Activated CD8-positive, alpha-beta memory T cell treated with anti-CD3 and anti-CD28 coated beads, Interleukin-2, amount 10 ng/mL, durations not matched to agents 7 days and 5 days (primary cell): ENCODE measurements at regions of chr15 and their contacts with region 1.

Region 1: GRCh38 chr15:85044251-85044853 is 62.7 kb downstream of the PDE8A start:
- DNase-seq: peak; percentile 67
- ATAC-seq: peak; percentile 58
- H3K4me3 Mint-ChIP-seq: no peak overlapping the region
- H3K27ac Mint-ChIP-seq: no peak overlapping the region
- H3K4me1 Mint-ChIP-seq: peaks cover 35% of the 10 kb centered on the region
- H3K27me3 Mint-ChIP-seq: no peaks in the 10 kb centered on the region

Region 2: DNA sequence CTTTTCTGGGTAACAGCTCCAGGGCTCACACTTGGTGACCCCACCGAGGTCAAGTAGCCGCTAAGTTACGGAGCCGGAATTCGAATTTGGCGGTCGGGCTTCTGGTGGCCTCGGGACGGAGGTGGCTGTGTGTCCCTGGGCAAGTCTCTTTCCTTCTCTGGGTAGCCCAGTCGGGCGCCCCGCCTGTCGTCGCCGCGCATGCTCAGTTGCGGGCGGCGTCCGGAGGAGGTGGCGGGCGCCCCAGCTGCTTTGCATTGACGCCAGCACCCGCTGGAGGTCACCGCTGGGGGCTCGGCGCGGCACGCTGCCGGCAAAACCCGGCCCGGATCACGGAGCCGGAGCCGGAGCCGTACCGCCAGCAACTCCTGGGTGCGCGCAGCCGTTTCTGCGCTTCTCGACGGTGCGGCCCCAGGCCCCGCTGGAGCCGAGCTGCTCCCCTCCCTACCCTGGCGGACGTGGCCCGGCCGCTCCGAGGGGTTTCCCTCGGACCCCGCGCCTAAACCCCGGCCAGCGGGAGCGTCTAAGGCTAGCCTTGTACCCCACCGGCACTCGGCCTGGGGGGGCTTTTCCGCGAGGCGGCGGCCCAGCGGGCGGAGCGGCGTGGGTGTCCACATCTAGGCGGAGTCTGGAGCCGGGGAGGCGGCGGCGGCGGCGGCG is 63.2 kb before region 1 on chr15:
- CTCF ChIA-PET with region 1: interaction called, 15 read pairs
- DNase-seq: peak; percentile 97
- ATAC-seq: peak; percentile 82
- H3K4me3 Mint-ChIP-seq: peak overlapping the region; percentile 88
- H3K27ac Mint-ChIP-seq: peak overlapping the region; percentile 92
- H3K4me1 Mint-ChIP-seq: peaks cover 40% of the 10 kb centered on the region
- H3K27me3 Mint-ChIP-seq: peaks cover 10% of the 10 kb centered on the region

Region 3: GRCh38 chr15:85482894-85483293 is 438.5 kb after region 1 on chr15:
- CTCF ChIA-PET with region 1: no interaction called
- DNase-seq: no peak
- ATAC-seq: no peak
- H3K4me3 Mint-ChIP-seq: no peak overlapping the region
- H3K27ac Mint-ChIP-seq: no peak overlapping the region
- H3K4me1 Mint-ChIP-seq: peaks cover 44% of the 10 kb centered on the region
- H3K27me3 Mint-ChIP-seq: no peaks in the 10 kb centered on the region